ENCODE measurements at regions of chr11 and their contacts with region 1.

Region 1: DNA sequence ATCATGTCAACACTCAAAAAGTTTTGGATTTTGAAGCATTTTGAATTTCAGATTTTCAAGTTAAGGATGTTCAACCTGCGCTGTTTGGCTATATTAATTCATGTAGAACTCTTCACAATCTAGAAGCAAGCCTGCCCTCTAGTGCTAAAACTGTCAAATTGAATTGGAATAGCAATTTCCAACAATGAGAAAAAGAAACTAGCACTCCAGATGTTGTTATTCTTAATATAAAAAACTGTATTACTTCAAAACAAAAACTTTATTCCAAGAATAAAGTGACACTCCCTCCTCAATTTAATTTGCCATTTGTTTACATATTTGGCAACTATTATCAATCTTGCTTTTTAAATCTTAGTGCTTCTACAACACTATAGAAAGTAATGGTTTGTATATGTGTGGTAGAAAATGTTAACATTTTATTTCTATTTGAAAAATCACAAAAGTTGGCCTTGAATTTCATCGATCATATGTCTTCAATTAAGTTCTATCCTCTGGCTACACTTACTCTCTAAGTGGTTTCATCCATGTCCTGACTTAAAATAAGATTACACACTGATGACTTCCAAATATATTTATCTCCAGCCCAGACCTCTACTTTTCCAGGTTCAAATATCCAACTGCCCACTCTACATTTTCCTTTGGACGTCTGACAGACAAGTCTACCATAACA is 36.6 kb downstream of the DCUN1D5 start:
- DNase-seq: peak; percentile 7
- ATAC-seq: peak; percentile 81; the same call in 1 of the 2 replicates
- H3K4me3 ChIP-seq: no peak overlapping the region
- H3K27ac ChIP-seq: no peak overlapping the region
- H3K4me1 ChIP-seq: no peaks in the 10 kb centered on the region
- H3K27me3 ChIP-seq: no peaks in the 10 kb centered on the region
- CTCF ChIP-seq: peak; percentile 73; the same call in 1 of the 2 replicates

Region 2: DNA sequence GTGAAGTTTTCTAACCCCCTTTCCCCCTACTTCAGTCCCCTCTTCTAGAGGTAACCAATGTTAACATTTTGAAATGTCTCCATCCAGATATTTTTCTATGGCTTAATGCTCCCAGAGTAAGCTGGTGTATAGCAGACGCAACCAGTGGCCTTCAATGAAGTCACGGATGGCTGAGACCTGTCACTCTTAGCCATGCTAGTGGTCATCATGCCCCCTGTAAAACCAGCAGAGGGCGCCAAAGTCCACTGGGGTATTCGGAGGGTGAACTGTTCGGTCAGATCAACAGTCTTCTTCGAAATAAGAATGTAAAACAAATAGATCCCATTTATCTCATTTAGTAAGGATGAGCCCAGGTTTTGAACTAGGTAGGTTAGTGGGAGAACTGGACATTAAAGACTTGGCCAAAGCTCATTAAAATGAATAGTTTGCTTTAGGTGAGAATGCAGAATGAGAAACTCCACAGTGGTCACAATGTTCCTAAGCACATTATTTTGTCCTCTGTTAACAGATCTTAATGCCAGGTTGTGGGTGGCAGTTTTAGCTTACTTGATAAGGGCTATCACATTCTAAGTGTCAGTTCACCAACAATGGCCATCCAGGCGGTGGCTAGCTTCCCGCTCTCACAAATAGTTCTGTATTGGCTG is 322.0 kb before region 1 on chr11:
- CTCF ChIA-PET with region 1: no interaction called
- POLR2A ChIA-PET with region 1: no interaction called
- in situ Hi-C with region 1: no loop called
- intact Hi-C with region 1: loop called (anchors 5 kb)
- DNase-seq: peak; percentile 41
- ATAC-seq: peak; percentile 96
- H3K4me3 ChIP-seq: no peak overlapping the region
- H3K27ac ChIP-seq: no peak overlapping the region
- H3K4me1 ChIP-seq: no peaks in the 10 kb centered on the region
- H3K27me3 ChIP-seq: peaks cover 16% of the 10 kb centered on the region
- CTCF ChIP-seq: peak; percentile 98

Region 3: GRCh38 chr11:102810945-102811660 is 244.3 kb before region 1 on chr11:
- CTCF ChIA-PET with region 1: no interaction called
- POLR2A ChIA-PET with region 1: no interaction called
- in situ Hi-C with region 1: no loop called
- intact Hi-C with region 1: loop called (anchors 5 kb)
- DNase-seq: no peak
- ATAC-seq: peak; percentile 72
- H3K4me3 ChIP-seq: no peak overlapping the region
- H3K27ac ChIP-seq: no peak overlapping the region
- H3K4me1 ChIP-seq: peaks cover 5% of the 10 kb centered on the region; the same call in 1 of the 2 replicates
- H3K27me3 ChIP-seq: peaks cover 10% of the 10 kb centered on the region
- CTCF ChIP-seq: peak; percentile 78

Region 4: GRCh38 chr11:102831489-102832440 is 223.6 kb before region 1 on chr11:
- CTCF ChIA-PET with region 1: no interaction called
- POLR2A ChIA-PET with region 1: no interaction called
- in situ Hi-C with region 1: no loop called
- intact Hi-C with region 1: loop called (anchors 5 kb)
- DNase-seq: no peak
- ATAC-seq: peak; percentile 91
- H3K4me3 ChIP-seq: peak overlapping the region; percentile 38 to 62
- H3K27ac ChIP-seq: no peak overlapping the region
- H3K4me1 ChIP-seq: peaks cover 6% of the 10 kb centered on the region
- H3K27me3 ChIP-seq: peaks cover 34% of the 10 kb centered on the region
- CTCF ChIP-seq: peak; percentile 94

Region 5: GRCh38 chr11:102940714-102941588 is 114.4 kb before region 1 on chr11:
- CTCF ChIA-PET with region 1: no interaction called
- POLR2A ChIA-PET with region 1: no interaction called
- in situ Hi-C with region 1: no loop called
- intact Hi-C with region 1: loop called (anchors 10 kb)
- DNase-seq: peak; percentile 47
- ATAC-seq: peak; percentile 96
- H3K4me3 ChIP-seq: no peak overlapping the region
- H3K27ac ChIP-seq: no peak overlapping the region
- H3K4me1 ChIP-seq: no peaks in the 10 kb centered on the region
- H3K27me3 ChIP-seq: peaks cover 5% of the 10 kb centered on the region; the same call in 1 of the 2 replicates
- CTCF ChIP-seq: peak; percentile 89